H1 (cell line): ENCODE measurements at regions of chr20 and their contacts with region 1.

Region 1: DNA sequence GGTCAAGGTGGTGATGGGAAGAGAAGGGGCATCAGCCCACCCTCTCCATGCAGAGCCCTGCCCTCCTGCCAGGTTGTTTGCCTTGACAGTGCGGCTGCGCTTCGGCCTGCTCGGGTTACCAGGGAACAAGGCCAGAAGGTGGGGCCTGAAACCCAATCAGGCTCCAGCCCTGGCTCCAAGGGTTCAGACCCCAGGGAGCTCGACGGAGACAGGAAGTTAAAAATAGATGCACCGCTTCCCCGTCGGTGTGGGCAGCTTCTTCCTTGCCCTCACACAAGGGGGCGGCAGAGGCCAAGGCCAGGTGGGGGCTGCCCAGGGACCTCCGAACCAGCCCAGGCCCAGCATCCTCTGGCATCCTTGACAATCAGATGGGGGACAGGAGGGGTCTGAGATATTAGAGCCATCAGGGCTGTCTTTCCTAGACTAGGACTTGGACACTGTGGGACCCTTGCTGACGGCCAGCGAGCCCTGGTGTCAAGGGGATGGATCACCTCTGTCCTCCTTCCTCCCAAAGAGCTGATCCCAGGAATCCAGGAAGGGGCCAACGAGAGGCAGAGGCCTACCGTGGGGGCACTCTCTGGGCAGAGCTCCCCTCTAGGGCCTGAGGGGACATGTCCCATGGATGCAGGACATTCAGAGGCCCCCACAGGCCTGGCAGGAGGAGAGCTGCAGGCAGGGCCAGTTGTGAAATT is 65.2 kb downstream of the RIPOR3 start:
- DNase-seq: peak in 1 of 2 experiments; percentile 94
- H3K4me3 ChIP-seq: no peak overlapping the region
- H3K27ac ChIP-seq: no peak overlapping the region
- H3K4me1 ChIP-seq: peaks cover 0 to 8% (median 3%) of the 10 kb centered on the region in 4 experiments; a peak in 4 of 7 replicates
- H3K27me3 ChIP-seq: no peaks in the 10 kb centered on the region
- CTCF ChIP-seq: peak; percentile 88 to 96 (median 90)
- EP300 ChIP-seq: no peak
- POLR2A ChIP-seq: no peak
- RAD21 ChIP-seq: peak; percentile 93

Region 2: DNA sequence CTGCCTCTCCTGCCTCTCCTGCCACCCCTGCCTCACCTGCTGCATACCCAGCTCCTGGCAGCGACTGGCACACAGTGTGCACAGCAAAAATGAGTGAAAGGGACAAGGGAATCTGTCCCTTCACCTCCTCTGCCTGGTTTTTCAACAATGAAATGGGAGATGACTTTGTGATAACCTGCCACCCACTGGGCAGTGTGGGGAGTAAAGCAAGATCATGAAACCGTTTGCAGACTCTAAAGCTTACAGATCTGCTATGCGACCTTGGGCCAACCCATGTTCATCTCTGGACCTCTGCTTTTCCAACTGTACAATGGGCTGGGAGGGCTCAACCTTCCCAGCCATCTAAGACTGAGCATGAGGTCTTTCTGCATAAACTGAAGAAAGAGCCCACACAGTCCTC is 15.9 kb before region 1 on chr20:
- CTCF ChIA-PET with region 1: interaction called, 22 read pairs
- POLR2A ChIA-PET with region 1: interaction called, 3 read pairs
- DNase-seq: no peak
- H3K4me3 ChIP-seq: no peak overlapping the region
- H3K27ac ChIP-seq: no peak overlapping the region
- H3K4me1 ChIP-seq: peaks cover 0 to 8% (median 2%) of the 10 kb centered on the region in 4 experiments; a peak in 3 of 7 replicates
- H3K27me3 ChIP-seq: no peaks in the 10 kb centered on the region
- CTCF ChIP-seq: no peak
- EP300 ChIP-seq: no peak
- POLR2A ChIP-seq: no peak
- RAD21 ChIP-seq: no peak

Region 3: DNA sequence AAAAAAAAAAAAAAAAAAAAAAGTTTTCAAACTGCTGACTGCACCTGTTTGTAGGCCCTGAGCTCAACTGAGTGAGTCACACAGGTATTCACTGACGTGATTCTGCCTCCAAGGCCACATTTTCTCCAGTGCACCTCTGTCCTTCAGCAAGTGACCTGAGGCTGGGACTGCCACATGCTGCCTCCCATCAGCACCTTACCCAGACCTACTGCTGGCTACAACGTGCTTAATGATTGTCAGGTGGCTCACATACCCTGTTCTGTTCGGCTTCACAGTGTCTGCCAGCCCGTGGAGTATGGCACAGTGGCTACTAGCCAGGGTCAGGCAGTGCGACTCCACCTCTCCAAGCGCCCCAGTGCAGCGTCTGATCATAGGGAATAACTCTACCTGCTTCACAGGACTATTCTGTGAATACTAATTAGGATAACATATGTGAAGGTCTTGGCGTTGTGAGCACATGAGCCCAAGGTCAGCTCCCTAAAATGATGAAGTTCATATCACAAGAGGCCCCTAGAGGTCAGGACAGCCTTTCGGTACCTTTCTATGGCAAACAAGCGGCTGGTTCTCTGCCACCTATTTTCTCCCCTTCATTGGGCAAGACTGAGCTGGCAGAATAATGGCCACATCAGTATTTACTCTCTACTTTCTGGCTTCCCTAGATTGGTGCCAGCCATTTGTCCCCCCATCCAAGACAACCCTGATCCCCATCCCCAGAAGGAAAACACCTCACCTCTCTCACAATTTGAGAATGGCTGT is 37.1 kb after region 1 on chr20:
- CTCF ChIA-PET with region 1: interaction called, 49 read pairs
- POLR2A ChIA-PET with region 1: interaction called, 3 read pairs
- DNase-seq: no peak
- H3K4me3 ChIP-seq: no peak overlapping the region
- H3K27ac ChIP-seq: no peak overlapping the region
- H3K4me1 ChIP-seq: peaks cover 0 to 7% (median 1%) of the 10 kb centered on the region in 4 experiments; a peak in 3 of 7 replicates
- H3K27me3 ChIP-seq: no peaks in the 10 kb centered on the region
- CTCF ChIP-seq: peak in 2 of 3 experiments; percentile 65 to 72; a peak in 3 of 4 replicates
- EP300 ChIP-seq: no peak
- POLR2A ChIP-seq: no peak
- RAD21 ChIP-seq: peak; percentile 76 to 84

Region 4: GRCh38 chr20:50713657-50714101 is 87.5 kb after region 1 on chr20:
- CTCF ChIA-PET with region 1: interaction called, 61 read pairs
- POLR2A ChIA-PET with region 1: no interaction called
- DNase-seq: peak in 1 of 2 experiments; percentile 56
- H3K4me3 ChIP-seq: no peak overlapping the region
- H3K27ac ChIP-seq: no peak overlapping the region
- H3K4me1 ChIP-seq: peaks cover 0 to 3% (median 2%) of the 10 kb centered on the region in 4 experiments; a peak in 1 of 7 replicates
- H3K27me3 ChIP-seq: no peaks in the 10 kb centered on the region
- CTCF ChIP-seq: peak; percentile 46 to 68 (median 66)
- EP300 ChIP-seq: no peak
- POLR2A ChIP-seq: no peak
- RAD21 ChIP-seq: peak; percentile 65 to 76

Region 5: GRCh38 chr20:50744143-50744792 is 118.1 kb after region 1 on chr20:
- CTCF ChIA-PET with region 1: interaction called, 41 read pairs
- POLR2A ChIA-PET with region 1: no interaction called
- DNase-seq: peak in 1 of 2 experiments; percentile 46
- H3K4me3 ChIP-seq: no peak overlapping the region
- H3K27ac ChIP-seq: 0 out of 2 replicates have a peak overlapping the region, but pooled peaks have one; percentile 45
- H3K4me1 ChIP-seq: peaks cover 2 to 8% (median 5%) of the 10 kb centered on the region in 4 experiments; a peak in 4 of 7 replicates
- H3K27me3 ChIP-seq: no peaks in the 10 kb centered on the region
- CTCF ChIP-seq: 0 out of 4 replicates have a peak, but pooled peaks of 1 of the 3 experiments have one; percentile 9
- EP300 ChIP-seq: no peak
- POLR2A ChIP-seq: no peak
- RAD21 ChIP-seq: peak; percentile 23 to 45; a peak in 2 of 4 replicates

Region 6: GRCh38 chr20:50790651-50791277 is 164.6 kb after region 1 on chr20:
- CTCF ChIA-PET with region 1: interaction called, 57 read pairs
- POLR2A ChIA-PET with region 1: interaction called, 4 read pairs
- DNase-seq: peak; percentile 78 to 93
- H3K4me3 ChIP-seq: peak overlapping the region in 2 of 4 experiments; percentile 1 to 29; a peak in 2 of 8 replicates
- H3K27ac ChIP-seq: 0 out of 2 replicates have a peak overlapping the region, but pooled peaks have one; percentile 32
- H3K4me1 ChIP-seq: peaks cover 2 to 4% (median 3%) of the 10 kb centered on the region in 4 experiments; a peak in 5 of 7 replicates
- H3K27me3 ChIP-seq: no peaks in the 10 kb centered on the region; a peak in 1 of 7 replicates
- CTCF ChIP-seq: peak; percentile 69 to 84 (median 82)
- EP300 ChIP-seq: peak in 1 of 2 experiments; percentile 85; a peak in 1 of 3 replicates
- POLR2A ChIP-seq: peak in 1 of 2 experiments; percentile 74; a peak in 2 of 3 replicates
- RAD21 ChIP-seq: peak; percentile 28 to 54

Region 7: DNA sequence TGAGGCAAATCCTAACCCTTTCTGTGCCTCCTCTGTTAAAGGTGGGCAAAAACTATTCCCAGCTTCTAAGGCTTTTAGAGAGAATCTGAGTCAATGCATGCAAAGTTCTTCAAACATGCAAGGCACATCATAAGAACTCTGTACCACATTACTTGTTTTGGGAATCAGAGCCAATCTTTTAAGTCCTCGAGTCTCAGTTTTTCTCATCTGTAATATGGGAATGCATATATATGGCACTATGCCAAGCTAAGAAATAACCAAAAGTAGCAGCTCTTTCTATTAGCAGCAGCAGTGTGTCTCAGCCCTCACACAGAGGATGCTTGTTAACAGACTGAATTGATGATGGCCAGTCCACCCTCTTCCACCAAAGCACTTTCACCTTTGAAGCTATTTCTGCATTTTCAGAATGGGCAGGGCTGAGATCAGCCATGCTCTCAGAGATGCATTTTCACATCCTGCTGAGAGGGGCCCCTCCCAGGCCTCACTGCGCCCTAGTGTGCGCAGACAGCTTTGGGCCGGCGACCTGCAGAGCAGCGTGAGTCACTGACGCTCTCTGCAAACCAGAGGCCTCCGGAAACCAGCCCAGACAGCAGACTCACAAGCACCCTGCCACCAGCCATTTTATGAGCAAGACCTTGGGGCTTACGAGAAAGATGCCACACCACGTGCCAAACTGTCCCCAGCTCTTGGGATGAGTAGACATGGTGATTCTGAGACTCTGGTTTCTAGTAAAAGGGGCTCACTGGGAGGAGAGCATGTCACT is 778.3 kb after region 1 on chr20:
- CTCF ChIA-PET with region 1: no interaction called
- POLR2A ChIA-PET with region 1: no interaction called
- DNase-seq: no peak
- H3K4me3 ChIP-seq: no peak overlapping the region
- H3K27ac ChIP-seq: no peak overlapping the region
- H3K4me1 ChIP-seq: no peaks in the 10 kb centered on the region
- H3K27me3 ChIP-seq: no peaks in the 10 kb centered on the region
- CTCF ChIP-seq: no peak
- EP300 ChIP-seq: no peak
- POLR2A ChIP-seq: no peak
- RAD21 ChIP-seq: no peak